ENCODE measurements at regions of chr17 and their contacts with region 1.

Region 1: GRCh38 chr17:51381262-51381661 is 120.9 kb downstream of the UTP18 start:
- DNase-seq: no peak
- H3K4me3 ChIP-seq: no peak overlapping the region
- H3K27ac ChIP-seq: no peak overlapping the region
- H3K4me1 ChIP-seq: no peaks in the 10 kb centered on the region
- H3K27me3 ChIP-seq: no peaks in the 10 kb centered on the region
- CTCF ChIP-seq: no peak
- EP300 ChIP-seq: no peak
- POLR2A ChIP-seq: no peak

Region 2: DNA sequence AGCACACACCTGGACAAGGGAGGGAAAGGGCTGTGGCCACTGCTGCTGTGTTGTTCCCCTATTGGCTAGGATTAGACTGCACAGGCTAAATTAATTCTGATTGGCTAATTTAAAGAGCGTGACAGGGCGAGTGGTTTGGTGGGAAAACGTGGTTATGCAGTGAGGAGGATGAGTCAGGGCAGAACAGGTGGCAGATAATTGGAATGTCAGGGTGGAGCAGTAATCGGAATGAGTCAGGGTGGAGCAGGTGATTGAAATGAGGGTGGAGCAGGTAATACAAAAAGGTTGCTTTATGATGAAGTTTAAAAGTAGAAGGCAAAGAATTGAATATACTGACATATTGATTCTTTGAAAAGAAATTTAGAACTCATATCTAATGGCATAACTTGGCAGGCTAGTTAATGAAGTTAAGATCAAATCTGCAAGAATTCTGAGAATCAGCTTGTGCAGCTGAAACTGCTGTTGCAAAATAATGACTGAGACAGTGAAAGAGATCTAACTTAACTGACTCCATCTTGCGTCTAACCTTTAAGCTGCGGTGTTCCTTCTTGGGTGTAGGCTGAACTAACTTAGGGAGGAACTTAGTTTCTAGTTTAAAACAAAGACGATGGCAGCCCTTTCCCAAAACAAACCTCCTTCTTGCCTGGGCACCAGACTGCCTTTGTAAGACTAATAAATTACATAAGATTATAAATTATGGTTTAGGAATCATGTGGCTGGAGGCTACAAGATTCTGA is 53.3 kb after region 1 on chr17:
- intact Hi-C with region 1: loop called in 1 of 4 experiments (anchors 5 kb)
- DNase-seq: no peak
- H3K4me3 ChIP-seq: no peak overlapping the region
- H3K27ac ChIP-seq: no peak overlapping the region
- H3K4me1 ChIP-seq: no peaks in the 10 kb centered on the region
- H3K27me3 ChIP-seq: no peaks in the 10 kb centered on the region
- CTCF ChIP-seq: no peak
- EP300 ChIP-seq: no peak
- POLR2A ChIP-seq: no peak

Region 3: GRCh38 chr17:51537996-51538550 is 156.8 kb after region 1 on chr17:
- intact Hi-C with region 1: no loop called
- DNase-seq: no peak
- H3K4me3 ChIP-seq: no peak overlapping the region
- H3K27ac ChIP-seq: no peak overlapping the region
- H3K4me1 ChIP-seq: no peaks in the 10 kb centered on the region
- H3K27me3 ChIP-seq: no peaks in the 10 kb centered on the region
- CTCF ChIP-seq: no peak
- EP300 ChIP-seq: no peak
- POLR2A ChIP-seq: no peak